ENCODE measurements at regions of chr7 and their contacts with region 1.

Region 1: DNA sequence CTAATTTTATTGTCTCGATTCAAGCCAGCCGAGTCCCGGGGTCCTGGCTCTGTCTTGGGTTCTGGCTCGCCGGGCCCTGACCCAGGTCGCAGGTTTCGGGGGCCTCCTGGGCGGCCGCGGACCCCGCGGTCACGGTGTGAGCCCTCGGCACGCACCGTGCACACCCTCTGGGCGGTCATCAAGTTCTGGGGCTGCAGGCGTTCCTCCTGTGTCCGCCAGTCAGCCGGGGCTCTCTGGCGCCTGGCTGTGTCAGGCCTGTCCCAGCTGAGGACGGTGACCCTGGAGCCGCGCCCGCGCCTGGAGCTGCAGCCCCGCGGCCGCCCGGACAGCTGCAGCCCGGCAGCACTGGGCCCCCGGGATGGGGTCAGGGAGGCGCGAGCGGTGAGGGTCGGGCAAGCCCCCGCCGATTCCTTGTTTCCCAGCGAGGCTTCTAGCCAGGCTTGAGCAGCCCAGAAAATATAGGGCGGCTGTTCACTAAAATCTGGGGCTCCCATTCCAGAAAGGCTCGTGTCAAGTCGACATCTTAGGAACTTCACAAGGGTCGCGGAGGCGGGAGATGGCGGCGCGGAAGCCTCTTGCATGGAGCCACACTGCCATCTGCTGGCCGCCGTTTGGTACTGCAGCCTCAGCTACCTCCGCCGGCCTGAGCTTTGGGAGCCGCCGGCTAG is 4.2 kb upstream of the HOXA7 start:
- DNase-seq: peak; percentile 90
- CTCF ChIP-seq: peak; percentile 98

Region 2: DNA sequence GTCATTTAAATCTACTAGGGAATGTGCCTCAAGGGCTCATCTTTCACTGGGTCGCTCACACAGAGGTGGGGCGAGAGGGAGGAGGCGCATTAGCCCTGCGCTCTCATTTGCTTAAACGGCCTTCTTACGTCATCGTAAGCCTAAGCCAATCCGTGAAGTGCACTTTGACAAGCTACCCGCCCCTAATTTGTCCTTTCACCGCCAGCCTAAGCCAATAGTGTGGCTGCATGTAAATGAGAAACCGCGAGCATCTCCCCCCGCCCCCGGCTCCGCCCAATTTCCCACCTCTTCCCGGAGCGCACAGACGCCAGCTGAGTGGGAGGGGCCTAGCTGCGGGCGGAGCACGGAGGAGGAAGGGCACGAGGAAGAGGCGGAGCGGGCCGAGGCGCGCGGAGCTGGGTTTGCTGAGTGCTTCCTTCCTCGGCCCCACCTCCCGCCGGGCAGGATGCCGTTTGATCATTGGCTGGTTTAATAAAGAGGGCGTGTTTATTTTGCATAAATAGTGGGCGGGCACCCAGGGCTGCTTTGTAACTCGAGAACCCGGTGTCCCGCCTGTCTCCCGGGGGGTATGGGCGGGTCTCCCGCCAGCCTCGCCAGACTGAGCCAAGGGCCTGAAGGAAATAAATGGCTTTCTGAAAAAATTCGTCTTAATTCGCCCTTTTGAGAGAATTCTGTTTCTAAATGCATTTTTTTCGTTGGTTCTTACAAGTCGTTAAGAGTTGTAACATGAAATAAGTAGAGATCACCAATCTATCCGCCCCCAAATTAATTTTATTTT is 1298.2 kb before region 1 on chr7:
- in situ Hi-C with region 1: loop called (anchors 10 kb)
- DNase-seq: peak; percentile 92
- CTCF ChIP-seq: no peak

Region 3: DNA sequence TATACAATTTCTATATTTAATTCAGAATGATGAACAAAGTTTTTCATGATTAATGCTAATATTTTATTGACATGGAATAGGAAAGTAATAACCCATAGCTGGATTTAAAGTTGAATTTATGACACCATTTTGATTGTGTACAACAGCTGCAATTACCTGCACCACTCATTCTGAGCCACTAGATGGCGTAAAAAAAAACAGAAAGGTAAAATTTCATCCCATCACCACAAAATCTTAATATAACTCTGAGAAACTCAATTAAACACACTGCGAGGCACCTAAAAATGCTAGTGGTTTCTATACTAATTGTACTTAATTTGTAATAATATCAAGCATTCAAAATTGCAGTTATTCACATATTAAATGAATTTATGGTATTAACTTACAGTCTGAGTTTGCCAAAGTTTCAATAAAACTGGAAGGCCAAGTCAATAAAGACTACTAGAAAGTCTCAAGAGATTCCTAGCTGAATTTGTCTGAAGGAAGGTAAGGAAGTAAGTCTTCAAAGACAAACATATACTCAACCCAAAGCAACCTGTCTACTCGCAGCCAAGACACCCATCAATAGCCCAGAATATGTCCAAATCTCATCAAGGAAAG is 478.8 kb before region 1 on chr7:
- in situ Hi-C with region 1: loop called (anchors 5 kb)
- DNase-seq: peak; percentile 10
- CTCF ChIP-seq: peak; percentile 67

Region 4: GRCh38 chr7:28473571-28474281 is 1313.0 kb after region 1 on chr7:
- in situ Hi-C with region 1: no loop called
- DNase-seq: no peak
- CTCF ChIP-seq: no peak

Measured in GM13976 (cell line).